Dorsolateral prefrontal cortex (tissue), 120 donors: ENCODE measurements at regions of chr16 and their contacts with region 1.

Region 1: DNA sequence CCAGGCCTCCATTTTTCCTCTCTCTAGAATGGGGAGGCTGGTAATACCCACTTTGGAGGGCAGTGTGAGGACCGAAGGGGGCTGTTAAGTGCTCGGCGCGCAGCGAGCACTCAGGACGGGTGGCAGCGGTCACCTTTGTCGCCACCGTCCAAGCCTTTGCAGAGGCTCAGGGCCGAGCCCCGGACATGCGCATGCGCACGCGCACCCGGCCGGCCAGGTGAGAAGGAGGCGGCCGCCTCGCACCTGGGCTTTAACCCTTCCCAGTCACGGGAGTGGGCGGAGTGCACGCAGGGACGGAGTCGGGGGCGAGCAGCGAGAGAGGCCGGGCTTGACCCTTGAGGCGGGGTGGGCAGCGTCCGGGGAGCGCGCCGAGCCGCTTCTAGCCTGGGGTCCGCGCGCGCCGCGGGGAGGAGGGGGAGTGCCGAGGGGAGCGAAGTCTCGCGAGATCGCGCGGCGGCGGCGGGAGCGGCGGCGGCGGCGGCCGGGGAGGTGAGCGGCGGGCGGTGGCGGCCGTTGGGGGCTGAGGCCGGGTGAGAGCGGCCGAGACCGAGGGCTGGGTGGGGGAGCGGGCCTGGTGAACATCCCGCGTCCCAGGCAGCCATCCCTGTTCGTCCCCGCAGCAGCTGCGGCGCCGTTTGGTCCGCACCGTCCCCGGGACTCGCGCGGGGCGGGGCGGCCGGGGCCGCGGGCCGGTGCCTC is at the start of gene MRTFB:
- DNase-seq: peak in 8 of 10 donors; percentile 46 to 84 (median 58)
- H3K4me3 ChIP-seq: peak within 1 kb of the TSS; percentile 61 to 96 (median 84)
- H3K27ac ChIP-seq: peak within 1 kb of the TSS in 58 of 59 donors; percentile 35 to 93 (median 83)
- H3K27me3 ChIP-seq: no peaks in the 10 kb centered on the region
- CTCF ChIP-seq: no peak
- total RNA-seq, gene MRTFB: 76.4 to 314 (median 223) TPM

Region 2: GRCh38 chr16:14186007-14186794 is 115.2 kb after region 1 on chr16:
- intact Hi-C with region 1: loop called in 1 of 2 experiments (anchors 10 kb)
- DNase-seq: peak in 8 of 10 donors; percentile 38 to 78 (median 68)
- H3K4me3 ChIP-seq: peak overlapping the region; percentile 31 to 77 (median 61)
- H3K27ac ChIP-seq: peak overlapping the region in 58 of 59 donors; percentile 11 to 94 (median 84)
- H3K27me3 ChIP-seq: no peaks in the 10 kb centered on the region
- CTCF ChIP-seq: peak in 51 of 56 donors; percentile 16 to 64 (median 44)

Region 3: DNA sequence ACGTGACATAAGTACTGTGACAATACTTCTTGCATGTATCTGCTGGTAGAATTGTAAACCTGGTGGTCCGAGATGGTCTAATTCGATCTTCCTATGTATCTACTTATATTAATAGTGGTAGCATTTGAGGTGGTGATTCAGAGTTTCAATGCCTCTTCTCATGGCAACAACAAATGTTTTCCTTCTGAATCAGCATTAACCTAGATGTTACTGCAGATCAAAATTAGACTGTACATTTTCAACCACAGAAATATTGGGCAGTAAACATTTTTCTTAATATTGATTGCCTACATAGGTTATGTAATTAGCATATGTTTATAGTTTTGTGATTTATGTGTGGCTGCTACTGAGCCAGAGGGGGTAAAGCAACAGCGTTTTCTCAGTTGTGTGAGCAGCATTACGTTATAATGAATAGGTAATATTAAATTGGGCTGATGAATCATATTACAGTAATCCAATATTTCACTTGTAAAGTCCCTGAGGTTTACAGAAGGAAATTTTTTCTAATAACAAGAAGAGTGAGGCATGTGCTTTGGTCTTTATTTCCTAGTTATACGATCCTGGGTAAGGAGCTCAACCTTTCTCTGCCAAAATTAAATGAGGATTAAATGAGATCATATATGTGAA is 1344.5 kb after region 1 on chr16:
- intact Hi-C with region 1: no loop called
- DNase-seq: no peak
- H3K4me3 ChIP-seq: no peak overlapping the region
- H3K27ac ChIP-seq: no peak overlapping the region
- H3K27me3 ChIP-seq: no peaks in the 10 kb centered on the region
- CTCF ChIP-seq: no peak